IMR-90 (cell line): ENCODE measurements at regions of chr11 and their contacts with region 1.

Region 1: DNA sequence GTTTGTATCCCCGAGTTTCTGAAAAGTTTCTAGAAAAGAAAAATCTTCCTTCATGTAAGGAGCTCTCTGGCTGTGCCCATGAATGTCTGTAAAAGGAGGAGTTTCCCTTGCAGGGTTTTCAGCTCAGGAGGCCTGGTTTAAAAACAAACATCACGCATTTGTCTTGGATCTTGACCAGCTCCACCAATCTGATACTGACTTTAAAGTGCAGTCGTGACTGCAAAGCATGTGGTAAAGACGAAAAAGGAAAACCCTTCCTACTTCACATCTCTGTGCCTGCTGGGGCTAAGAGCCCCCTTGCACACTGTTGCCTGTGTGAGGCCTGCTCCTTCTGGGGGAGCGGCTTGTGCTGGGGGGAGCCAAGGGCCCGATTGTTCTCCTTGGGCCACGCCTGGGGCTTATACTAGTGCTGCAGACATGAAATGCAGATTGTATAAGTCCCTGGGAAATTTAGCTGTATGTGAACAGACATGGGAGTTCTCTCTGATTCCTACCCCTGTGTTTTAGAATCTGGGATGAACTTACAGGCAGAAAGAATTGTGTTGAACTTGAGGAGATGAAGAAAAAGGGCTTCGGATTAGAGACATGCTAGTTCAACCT is 62.1 kb downstream of the ADAMTS15 start:
- DNase-seq: peak; percentile 83
- ATAC-seq: peak; percentile 90
- H3K4me3 ChIP-seq: no peak overlapping the region
- H3K27ac ChIP-seq: peak overlapping the region; percentile 82; the same call in 1 of the 2 replicates
- H3K4me1 ChIP-seq: peaks cover 28% of the 10 kb centered on the region
- H3K27me3 ChIP-seq: no peaks in the 10 kb centered on the region
- CTCF ChIP-seq: no peak
- POLR2A ChIP-seq: no peak
- RAD21 ChIP-seq: no peak

Region 2: DNA sequence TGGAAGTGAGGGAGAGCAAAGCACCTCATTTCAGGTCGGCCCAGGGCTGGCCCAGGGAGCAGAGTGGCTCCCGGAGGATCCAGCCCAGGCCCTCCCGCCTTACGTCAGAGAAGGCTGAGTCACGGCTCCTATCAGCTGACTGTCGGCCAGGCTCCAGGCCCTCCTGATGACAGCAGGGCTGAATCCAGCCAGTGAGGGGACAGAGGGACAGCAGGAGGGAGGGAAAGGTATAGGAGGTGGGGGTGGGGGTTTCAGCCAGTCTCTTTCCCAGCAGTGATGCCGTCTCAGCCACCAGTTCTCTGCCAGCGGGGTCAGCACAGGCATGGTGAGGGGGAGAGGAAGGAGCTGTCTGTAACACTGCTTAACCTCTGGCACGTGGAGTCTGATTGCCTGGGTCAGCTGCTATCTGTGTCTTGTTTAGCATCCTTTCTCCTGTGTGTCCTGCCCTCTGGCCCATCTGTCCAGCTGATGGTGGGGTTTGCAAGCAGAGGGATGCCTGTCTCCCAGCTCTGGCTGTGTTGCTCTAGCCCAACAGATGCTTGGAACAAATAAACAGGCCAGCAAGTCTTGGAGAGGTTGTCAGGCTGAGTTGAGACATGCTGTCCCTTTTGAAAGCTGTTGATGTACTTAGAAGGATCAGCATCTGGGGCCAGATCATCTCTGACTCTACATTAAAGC is 11.9 kb after region 1 on chr11:
- CTCF ChIA-PET with region 1: interaction called, 11 read pairs
- POLR2A ChIA-PET with region 1: no interaction called
- dilution Hi-C with region 1: no loop called
- in situ Hi-C with region 1: no loop called
- intact Hi-C with region 1: no loop called
- DNase-seq: peak; percentile 97
- ATAC-seq: peak; percentile 95
- H3K4me3 ChIP-seq: no peak overlapping the region
- H3K27ac ChIP-seq: peak overlapping the region; percentile 95
- H3K4me1 ChIP-seq: peaks cover 20% of the 10 kb centered on the region
- H3K27me3 ChIP-seq: no peaks in the 10 kb centered on the region
- CTCF ChIP-seq: no peak
- POLR2A ChIP-seq: peak; percentile 60
- RAD21 ChIP-seq: no peak; the same call in 1 of the 2 replicates